PC-3 (cell line): ENCODE measurements at regions of chr10 and their contacts with region 1.

Region 1: DNA sequence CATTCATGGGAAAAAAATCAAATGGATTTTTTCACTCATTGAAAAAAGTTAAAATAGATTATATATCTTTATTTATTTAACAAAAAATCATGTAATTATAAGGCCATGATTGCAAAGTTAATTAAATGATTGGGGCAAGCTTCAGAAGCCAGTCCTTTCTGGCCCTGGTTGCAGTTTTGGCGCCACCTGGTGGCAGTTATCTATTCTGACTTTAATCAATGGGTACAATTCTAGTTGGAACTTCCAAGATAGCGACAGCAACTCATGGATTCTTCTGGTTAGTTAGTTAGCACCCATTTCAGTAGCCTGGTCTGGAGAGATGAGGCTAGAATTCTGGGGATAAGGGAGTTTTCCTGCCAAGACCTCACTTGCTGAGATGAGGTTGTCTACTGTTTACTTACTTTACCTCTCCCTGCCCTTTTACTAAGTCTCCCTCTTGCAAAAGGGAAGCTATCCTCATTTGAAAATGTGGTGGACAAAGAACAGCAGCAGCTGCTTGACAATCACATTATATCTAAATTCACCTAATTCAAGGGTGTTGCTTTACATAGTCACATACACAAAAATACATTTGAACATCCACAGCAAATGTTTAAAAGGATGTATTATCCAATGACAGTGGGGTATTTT is 42.3 kb downstream of the NOC3L start:
- DNase-seq: peak; percentile 73
- ATAC-seq: peak; percentile 53
- H3K4me3 ChIP-seq: no peak overlapping the region
- H3K27ac ChIP-seq: no peak overlapping the region
- H3K4me1 ChIP-seq: no peaks in the 10 kb centered on the region
- H3K27me3 ChIP-seq: no peaks in the 10 kb centered on the region
- CTCF ChIP-seq: peak; percentile 69

Region 2: DNA sequence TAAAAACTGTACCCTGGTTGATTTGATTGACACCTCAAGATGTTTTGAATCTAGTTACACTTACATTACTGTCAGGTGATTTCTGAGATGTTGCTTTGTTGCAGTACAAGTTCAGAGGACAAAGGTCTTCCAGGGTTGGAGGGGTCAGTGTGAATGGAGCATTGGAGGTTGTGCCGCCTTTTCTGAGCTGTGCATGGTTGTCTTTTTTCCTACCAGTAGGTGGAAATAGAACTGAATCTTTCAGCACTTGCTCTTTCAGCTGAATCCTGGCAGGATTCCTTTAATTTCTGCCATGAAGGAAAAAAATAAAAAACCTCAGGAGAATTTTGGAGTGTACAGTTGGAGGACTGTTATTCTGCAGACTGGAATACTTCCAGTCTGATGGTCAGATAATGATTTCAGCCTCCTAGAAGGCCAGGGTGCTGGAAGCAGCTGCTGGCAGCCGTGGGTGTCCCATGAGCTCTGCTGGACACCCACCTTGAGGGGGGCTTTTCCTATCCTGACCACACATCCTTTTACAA is 244.0 kb before region 1 on chr10:
- CTCF ChIA-PET with region 1: no interaction called
- POLR2A ChIA-PET with region 1: no interaction called
- intact Hi-C with region 1: loop called (anchors 10 kb)
- DNase-seq: peak; percentile 33
- ATAC-seq: peak; percentile 53
- H3K4me3 ChIP-seq: no peak overlapping the region
- H3K27ac ChIP-seq: no peak overlapping the region
- H3K4me1 ChIP-seq: no peaks in the 10 kb centered on the region
- H3K27me3 ChIP-seq: no peaks in the 10 kb centered on the region
- CTCF ChIP-seq: peak; percentile 49; the same call in 1 of the 2 replicates

Region 3: DNA sequence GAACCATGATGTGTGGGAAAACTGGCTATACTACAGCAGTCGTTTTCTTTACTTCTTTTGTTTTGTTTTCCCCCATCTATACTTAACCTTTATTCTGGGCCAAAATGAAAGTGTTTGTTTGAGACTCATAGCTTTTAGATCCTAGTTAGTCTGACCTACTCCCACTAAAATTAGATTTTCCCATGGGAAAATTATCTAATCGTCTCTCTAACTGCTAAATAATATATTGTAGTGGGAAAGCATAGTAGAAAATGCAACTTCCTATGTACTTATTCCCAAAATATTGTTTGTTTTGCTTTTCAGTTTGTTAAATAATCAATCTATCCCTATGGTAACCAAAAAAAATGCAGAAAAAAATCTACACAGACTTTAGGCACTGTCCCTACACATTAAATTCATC is 54.3 kb before region 1 on chr10:
- CTCF ChIA-PET with region 1: no interaction called
- POLR2A ChIA-PET with region 1: no interaction called
- intact Hi-C with region 1: no loop called
- DNase-seq: no peak
- ATAC-seq: no peak
- H3K4me3 ChIP-seq: no peak overlapping the region
- H3K27ac ChIP-seq: no peak overlapping the region
- H3K4me1 ChIP-seq: no peaks in the 10 kb centered on the region
- H3K27me3 ChIP-seq: no peaks in the 10 kb centered on the region
- CTCF ChIP-seq: no peak

Region 4: DNA sequence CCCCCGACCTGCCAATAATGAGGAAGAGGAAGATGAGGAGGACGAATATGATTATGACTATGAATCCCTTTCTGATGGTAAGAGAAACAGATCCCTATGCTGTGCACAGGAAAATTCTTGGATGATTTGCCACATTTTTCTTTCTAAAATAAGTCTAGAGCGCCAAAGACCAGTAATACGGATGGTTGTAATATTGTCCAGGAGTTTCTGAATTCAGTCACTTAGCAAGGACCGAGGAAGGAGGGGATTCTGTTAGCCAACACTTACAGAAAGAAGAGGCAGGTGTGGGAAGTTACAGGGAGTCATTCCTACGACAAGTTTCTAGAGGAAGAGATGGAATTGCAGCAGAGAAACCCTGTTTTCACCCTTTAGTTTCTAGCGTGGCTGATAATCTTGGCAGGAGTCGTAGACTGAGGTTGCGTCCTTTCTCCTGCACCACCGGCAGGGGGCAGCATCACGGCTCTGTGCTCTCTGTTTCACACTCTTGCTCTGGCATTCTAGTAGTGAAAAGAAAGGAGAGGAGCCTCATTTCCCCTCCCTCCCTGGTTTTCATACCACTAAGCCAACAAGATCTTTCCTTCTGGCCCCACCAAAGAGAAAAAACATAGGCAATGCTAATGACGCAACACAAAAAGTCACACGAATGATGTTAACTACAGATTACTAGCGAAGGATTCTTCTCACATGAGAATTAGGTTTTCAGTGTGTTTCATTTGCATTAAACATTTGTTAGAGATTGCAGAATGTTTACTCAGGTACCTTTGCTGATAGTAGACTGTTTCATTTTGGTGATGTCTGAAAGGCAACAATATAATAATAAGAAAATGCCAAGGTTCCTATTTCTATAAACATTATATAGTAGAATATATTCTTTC is 40.3 kb before region 1 on chr10:
- CTCF ChIA-PET with region 1: no interaction called
- POLR2A ChIA-PET with region 1: no interaction called
- intact Hi-C with region 1: loop called (anchors 5 kb)
- DNase-seq: peak; percentile 50
- ATAC-seq: peak; percentile 60
- H3K4me3 ChIP-seq: no peak overlapping the region
- H3K27ac ChIP-seq: no peak overlapping the region
- H3K4me1 ChIP-seq: peaks cover 11% of the 10 kb centered on the region
- H3K27me3 ChIP-seq: no peaks in the 10 kb centered on the region
- CTCF ChIP-seq: peak; percentile 85

Region 5: GRCh38 chr10:94706089-94706488 is 385.7 kb after region 1 on chr10:
- CTCF ChIA-PET with region 1: no interaction called
- POLR2A ChIA-PET with region 1: no interaction called
- intact Hi-C with region 1: no loop called
- DNase-seq: no peak
- ATAC-seq: no peak
- H3K4me3 ChIP-seq: no peak overlapping the region
- H3K27ac ChIP-seq: no peak overlapping the region
- H3K4me1 ChIP-seq: no peaks in the 10 kb centered on the region
- H3K27me3 ChIP-seq: no peaks in the 10 kb centered on the region
- CTCF ChIP-seq: no peak